Posterior cingulate gyrus (tissue), 11 donors: ENCODE measurements at regions of chr20 and their contacts with region 1.

Region 1: GRCh38 chr20:21099751-21100577 is 6.2 kb downstream of the LINC00237 start:
- DNase-seq: peak in 6 of 10 donors; percentile 20 to 90 (median 67)

Region 2: DNA sequence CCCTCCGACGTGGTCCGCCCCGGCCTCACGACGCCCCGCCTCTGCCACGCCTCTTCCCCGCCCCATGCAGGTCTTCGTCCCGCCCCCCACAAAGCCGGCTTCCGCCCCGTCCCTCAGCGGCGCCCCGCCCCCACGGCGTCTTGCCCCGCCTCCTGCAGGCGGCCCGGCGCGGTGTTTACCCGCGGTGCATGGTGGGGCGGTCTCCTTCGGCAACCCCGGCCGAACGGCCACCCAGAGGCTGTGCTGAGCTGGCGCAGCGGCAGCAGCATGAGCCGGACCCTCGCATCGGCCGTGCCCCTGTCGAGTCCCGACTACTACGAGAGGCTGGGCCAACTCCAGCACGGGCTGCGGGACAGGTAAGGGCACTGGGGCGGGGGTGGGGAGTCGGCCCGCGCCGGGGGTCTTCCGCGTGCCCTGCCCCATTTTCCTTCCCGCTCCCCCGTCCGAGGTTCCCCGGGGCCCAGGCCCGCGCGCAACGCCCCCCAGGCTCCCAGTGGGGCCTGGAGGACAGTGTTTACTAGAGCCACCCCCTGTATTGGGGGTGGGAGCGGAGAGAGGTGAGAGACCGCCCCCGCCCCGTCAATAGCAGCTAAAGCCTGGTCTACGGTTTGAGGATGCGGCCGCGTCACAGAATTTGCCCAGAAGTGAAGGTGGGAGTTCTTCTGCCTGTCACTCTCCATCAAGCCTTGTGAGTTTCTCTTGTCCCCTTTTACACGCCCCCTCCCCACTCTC is 26.1 kb after region 1 on chr20 and contains the start of gene KIZ:
- intact Hi-C with region 1: loop called (anchors 1 kb)
- DNase-seq: peak; percentile 93 to 99 (median 96)

Region 3: GRCh38 chr20:21514553-21515251 is 414.7 kb after region 1 on chr20:
- intact Hi-C with region 1: loop called (anchors 5 kb)
- DNase-seq: peak in 3 of 10 donors; percentile 45 to 83 (median 79)